Thyroid gland (tissue), 4 donors: ENCODE measurements at regions of chr13 and their contacts with region 1.

Region 1: GRCh38 chr13:99955747-99956472 is 15.7 kb downstream of the ZIC5 start:
- DNase-seq: no peak
- H3K4me3 ChIP-seq: no peak overlapping the region
- H3K27ac ChIP-seq: no peak overlapping the region
- H3K4me1 ChIP-seq: peaks cover 27 to 33% of the 10 kb centered on the region in 2 donors
- H3K27me3 ChIP-seq: peaks cover 59% of the 10 kb centered on the region
- CTCF ChIP-seq: no peak
- POLR2A ChIP-seq: no peak

Region 2: GRCh38 chr13:99830931-99831330 is 125.0 kb before region 1 on chr13:
- intact Hi-C with region 1: no loop called
- DNase-seq: no peak
- H3K4me3 ChIP-seq: no peak overlapping the region
- H3K27ac ChIP-seq: no peak overlapping the region
- H3K4me1 ChIP-seq: no peaks in the 10 kb centered on the region
- H3K27me3 ChIP-seq: no peaks in the 10 kb centered on the region
- CTCF ChIP-seq: no peak
- POLR2A ChIP-seq: no peak

Region 3: DNA sequence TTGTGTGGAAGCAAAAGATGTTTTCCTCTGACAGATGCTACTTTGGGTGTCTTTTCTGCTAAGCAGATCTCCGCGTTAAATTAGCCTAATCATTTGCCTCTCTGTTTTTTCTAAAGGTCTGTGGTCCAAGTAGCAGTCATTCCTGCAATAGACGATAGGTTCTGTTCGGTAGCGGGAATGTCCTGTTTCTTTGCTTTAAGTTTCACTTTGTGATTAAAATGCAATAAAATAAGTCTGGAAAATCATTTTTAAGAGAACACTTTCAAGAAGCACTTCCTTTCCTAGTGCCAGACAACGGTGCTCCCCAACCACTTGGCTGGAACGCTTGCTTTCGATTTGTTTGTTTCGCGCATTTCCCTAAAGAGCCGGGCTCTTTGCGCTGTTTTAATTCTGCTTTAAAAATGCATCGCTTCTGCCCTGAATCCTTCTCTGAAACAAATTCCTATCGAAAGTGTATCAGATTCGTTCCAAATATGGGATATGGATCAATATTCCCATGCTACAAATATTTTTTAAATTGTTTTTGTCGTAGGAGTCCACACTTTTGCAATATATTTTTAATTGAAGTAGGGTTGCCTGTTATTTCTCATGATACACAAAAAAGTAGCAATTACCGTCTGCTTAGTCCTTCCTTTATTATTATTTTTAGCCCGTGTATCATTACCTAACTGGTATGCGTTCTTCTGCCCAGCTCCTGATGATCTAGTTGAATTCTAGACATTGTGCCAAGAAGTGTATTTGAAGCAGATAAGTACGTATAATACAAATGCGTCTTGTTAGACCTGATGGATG is 39.9 kb after region 1 on chr13:
- intact Hi-C with region 1: loop called (anchors 5 kb)
- DNase-seq: no peak
- H3K4me3 ChIP-seq: no peak overlapping the region
- H3K27ac ChIP-seq: no peak overlapping the region
- H3K4me1 ChIP-seq: no peaks in the 10 kb centered on the region
- H3K27me3 ChIP-seq: peaks cover 71% of the 10 kb centered on the region
- CTCF ChIP-seq: no peak
- POLR2A ChIP-seq: no peak